AG04450 (cell line): ENCODE measurements at regions of chr16 and their contacts with region 1.

Region 1: GRCh38 chr16:67883872-67884261 is 818 bp upstream of the NRN1L start:
- DNase-seq: no peak
- H3K4me3 ChIP-seq: no peak overlapping the region
- H3K27ac ChIP-seq: no peak overlapping the region
- H3K27me3 ChIP-seq: no peaks in the 10 kb centered on the region
- CTCF ChIP-seq: peak; percentile 84; the same call in 1 of the 2 replicates

Region 2: DNA sequence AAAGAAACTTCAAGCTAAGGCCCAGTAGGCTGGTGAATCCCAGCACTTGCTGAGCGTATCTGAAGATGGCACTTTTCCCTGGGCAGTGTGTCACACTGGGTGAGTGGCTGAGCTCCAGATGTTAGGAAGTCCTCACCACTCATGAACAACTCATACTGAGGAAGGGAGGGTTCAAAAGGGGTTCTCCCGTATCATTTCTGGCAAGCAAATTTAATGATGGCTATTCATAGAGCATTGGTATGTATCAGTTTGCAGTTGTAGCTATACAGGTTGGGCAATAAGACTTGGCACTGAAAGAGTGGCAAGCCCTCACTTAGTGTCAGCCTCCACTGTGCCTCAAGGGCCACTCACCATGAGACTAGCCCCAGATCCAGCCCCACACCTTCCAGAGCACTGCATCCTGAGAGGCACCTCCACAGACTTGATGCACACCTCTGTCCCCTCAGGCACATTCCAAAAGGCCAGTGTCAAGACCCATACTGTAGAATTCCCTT is 175.5 kb before region 1 on chr16:
- CTCF ChIA-PET with region 1: no interaction called
- POLR2A ChIA-PET with region 1: no interaction called
- DNase-seq: no peak
- H3K4me3 ChIP-seq: no peak overlapping the region
- H3K27ac ChIP-seq: no peak overlapping the region
- H3K27me3 ChIP-seq: no peaks in the 10 kb centered on the region
- CTCF ChIP-seq: no peak

Region 3: GRCh38 chr16:67806428-67807147 is 77.3 kb before region 1 on chr16 and contains the starts of genes RANBP10 and TSNAXIP1:
- CTCF ChIA-PET with region 1: no interaction called
- POLR2A ChIA-PET with region 1: no interaction called
- DNase-seq: peak; percentile 97
- H3K4me3 ChIP-seq: peak within 1 kb of the TSS; percentile 95
- H3K27ac ChIP-seq: no peak within 1 kb of the TSS
- H3K27me3 ChIP-seq: no peaks in the 10 kb centered on the region
- CTCF ChIP-seq: no peak
- polyA plus RNA-seq, gene RANBP10: 11.3 and 11.7 TPM in 2 replicates
- polyA plus RNA-seq, gene TSNAXIP1: 0.92 and 1.1 TPM in 2 replicates

Region 4: GRCh38 chr16:67872786-67873537 is 10.9 kb before region 1 on chr16 and contains the start of gene EDC4:
- CTCF ChIA-PET with region 1: interaction called, 25 read pairs
- POLR2A ChIA-PET with region 1: no interaction called
- DNase-seq: peak; percentile 49
- H3K4me3 ChIP-seq: peak within 1 kb of the TSS; percentile 95
- H3K27ac ChIP-seq: peak within 1 kb of the TSS; percentile 57
- H3K27me3 ChIP-seq: no peaks in the 10 kb centered on the region
- CTCF ChIP-seq: no peak
- polyA plus RNA-seq, gene EDC4: 18.7 and 31.6 TPM in 2 replicates

Region 5: DNA sequence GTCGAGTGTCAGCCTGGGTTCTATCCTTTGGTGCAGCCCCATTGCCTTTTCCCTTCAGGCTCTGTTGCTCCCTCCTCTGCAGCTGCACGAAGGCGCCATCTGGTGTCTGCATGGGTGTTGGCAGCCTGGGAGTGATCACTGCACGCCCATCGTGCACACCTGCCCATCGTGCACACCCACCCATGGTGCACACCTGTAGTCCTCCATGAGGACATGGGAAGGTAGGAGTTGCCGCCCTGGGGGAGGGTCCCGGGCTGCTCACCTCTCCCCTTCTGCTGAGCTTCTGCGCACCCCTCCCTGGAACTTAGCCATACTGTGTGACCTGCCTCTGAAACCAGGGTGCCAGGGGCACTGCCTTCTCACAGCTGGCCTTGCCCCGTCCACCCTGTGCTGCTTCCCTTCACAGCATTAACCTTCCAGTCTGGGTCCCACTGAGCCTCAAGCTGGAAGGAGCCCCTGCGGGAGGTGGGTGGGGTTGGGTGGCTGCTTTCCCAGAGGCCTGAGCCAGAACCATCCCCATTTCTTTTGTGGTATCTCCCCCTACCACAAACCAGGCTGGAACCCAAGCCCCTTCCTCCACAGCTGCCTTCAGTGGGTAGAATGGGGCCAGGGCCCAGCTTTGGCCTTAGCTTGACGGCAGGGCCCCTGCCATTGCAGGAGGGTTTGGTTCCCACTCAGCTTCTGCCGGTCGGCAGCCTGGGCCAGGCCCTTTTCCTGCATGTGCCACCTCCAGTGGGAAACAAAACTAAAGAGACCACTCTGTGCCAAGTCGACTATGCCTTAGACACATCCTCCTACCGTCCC is 44.9 kb after region 1 on chr16:
- CTCF ChIA-PET with region 1: interaction called, 15 read pairs
- POLR2A ChIA-PET with region 1: interaction called, 3 read pairs
- DNase-seq: no peak
- H3K4me3 ChIP-seq: no peak overlapping the region
- H3K27ac ChIP-seq: no peak overlapping the region
- H3K27me3 ChIP-seq: no peaks in the 10 kb centered on the region
- CTCF ChIP-seq: peak; percentile 90

Region 6: DNA sequence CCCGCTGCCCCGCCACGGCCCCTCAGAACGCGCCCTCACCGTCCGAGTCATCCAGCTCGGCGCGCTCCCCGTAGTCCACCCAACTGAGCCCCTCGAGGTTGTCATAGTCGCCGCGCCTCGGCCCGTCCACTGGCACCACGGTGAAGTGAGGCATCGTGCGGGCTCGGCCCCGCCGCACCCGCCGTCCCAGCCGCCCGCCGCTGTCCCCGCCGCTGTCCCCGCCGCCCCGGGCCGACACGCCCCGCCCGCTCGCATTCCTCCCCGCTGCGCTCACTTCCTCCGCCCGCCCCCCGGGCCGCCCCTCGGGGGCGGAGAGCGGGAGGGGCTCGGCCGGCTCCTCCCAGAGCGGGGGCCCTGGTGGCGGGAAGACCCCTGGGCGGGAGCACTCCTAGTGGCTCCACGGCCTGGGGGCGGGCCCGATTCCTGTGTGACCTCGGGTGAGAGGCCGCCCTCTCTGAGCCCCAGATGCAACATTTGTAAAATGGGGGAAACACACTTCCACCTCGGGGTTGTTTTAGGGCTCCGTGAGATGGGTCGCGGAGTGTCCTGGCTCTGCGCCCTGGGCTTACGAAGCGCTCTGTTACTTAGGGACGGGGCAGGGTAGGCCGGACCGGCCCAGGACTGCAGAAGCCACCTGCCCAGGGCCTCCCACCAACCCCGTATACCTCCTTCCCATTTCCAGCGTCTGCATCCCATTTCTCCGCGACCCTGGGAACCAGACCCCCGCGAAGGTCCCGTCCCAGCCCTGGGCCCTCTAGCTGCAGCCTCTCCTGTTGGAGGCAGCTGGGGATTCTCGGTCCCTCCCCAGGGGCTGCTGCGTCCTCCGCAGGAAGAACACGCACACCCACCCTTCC is 84.8 kb after region 1 on chr16 and contains the start of gene SLC12A4:
- CTCF ChIA-PET with region 1: no interaction called
- POLR2A ChIA-PET with region 1: no interaction called
- DNase-seq: no peak
- H3K4me3 ChIP-seq: peak within 1 kb of the TSS; percentile 89
- H3K27ac ChIP-seq: peak within 1 kb of the TSS; percentile 80
- H3K27me3 ChIP-seq: no peaks in the 10 kb centered on the region
- CTCF ChIP-seq: no peak
- polyA plus RNA-seq, gene SLC12A4: 48.1 and 63.0 TPM in 2 replicates

Region 7: GRCh38 chr16:68013440-68013839 is 129.6 kb after region 1 on chr16:
- CTCF ChIA-PET with region 1: no interaction called
- POLR2A ChIA-PET with region 1: no interaction called
- DNase-seq: no peak
- H3K4me3 ChIP-seq: no peak overlapping the region
- H3K27ac ChIP-seq: no peak overlapping the region
- H3K27me3 ChIP-seq: peaks cover 5% of the 10 kb centered on the region
- CTCF ChIP-seq: no peak